ENCODE measurements at regions of chr12 and their contacts with region 1.

Region 1: DNA sequence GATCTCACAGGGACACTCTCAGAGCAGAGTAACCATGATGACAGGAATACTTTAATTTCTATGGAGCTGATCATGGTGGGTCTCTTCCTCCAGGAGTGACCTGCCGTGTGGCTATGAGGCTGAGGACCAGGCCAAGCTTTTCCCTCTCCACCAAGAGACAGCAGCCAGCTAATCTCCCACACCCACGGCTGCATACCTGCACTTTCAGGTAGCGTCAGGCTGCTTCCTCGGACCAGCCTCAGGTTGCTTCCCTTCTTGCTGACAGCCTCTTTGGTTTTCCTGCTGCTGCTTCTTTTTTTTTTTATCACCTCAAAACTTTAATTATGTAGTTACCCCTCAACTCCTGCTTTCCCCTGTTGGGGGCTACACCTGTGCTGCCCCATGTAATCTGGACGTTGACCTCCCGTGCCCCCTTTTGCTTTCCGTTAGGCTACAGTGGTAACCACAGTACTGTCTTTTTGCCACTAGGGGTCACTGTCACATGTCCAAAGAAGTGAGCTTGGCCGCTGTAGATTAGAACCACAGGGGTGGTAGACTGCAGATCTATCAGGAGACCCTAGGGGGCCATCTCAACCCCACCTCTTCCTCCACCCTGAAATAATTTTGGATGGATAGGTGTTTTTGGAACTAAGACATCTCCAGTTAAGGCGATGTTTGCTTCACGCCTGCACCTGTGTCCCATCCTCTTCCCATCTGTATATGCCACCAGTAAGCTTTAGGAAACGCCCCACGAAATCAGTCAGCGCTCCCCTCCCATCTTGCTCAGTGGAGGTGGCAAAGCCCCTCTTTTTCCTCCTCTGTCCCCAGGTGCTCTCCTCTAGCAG is 7.8 kb upstream of the PIP4K2C start:
- DNase-seq: peak; percentile 83
- H3K4me3 Mint-ChIP-seq: no peak overlapping the region
- H3K27ac Mint-ChIP-seq: no peak overlapping the region
- H3K4me1 Mint-ChIP-seq: peaks cover 6% of the 10 kb centered on the region
- H3K27me3 Mint-ChIP-seq: peaks cover 1% of the 10 kb centered on the region

Region 2: DNA sequence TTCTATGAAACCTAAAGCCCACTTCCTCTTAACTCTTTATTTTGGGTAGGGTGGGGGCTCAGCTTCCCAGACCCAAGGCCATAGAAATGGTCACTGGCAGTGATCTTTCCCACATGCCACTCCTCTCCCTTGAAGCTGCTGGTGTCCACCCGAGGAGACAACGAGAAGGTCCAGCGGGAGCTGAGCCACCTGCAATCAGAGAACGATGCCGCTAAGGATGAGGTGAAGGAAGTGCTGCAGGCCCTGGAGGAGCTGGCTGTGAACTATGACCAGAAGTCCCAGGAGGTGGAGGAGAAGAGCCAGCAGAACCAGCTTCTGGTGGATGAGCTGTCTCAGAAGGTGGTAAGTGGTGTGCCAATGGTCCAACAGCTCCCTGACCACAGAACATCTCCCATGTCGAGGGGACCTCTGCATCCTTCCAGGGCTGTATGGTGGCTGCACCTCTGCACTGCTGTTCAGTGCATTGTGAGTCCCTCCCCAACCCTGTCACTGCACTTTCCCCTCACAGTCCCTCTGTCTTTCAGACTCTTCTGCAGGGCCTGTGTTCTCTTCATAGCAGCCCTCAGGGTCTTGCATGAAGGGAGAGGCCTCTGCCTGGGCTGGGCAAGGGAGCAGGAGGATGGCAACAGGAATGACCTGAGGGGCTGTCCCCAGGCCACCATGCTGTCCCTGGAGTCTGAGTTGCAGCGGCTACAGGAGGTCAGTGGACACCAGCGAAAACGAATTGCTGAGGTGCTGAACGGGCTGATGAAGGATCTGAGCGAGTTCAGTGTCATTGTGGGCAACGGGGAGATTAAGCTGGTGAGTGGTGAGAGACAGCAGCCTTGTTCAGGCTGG is 11.1 kb before region 1 on chr12:
- CTCF ChIA-PET with region 1: interaction called, 32 read pairs
- POLR2A ChIA-PET with region 1: no interaction called
- DNase-seq: no peak
- H3K4me3 Mint-ChIP-seq: no peak overlapping the region
- H3K27ac Mint-ChIP-seq: no peak overlapping the region
- H3K4me1 Mint-ChIP-seq: no peaks in the 10 kb centered on the region
- H3K27me3 Mint-ChIP-seq: no peaks in the 10 kb centered on the region

Region 3: DNA sequence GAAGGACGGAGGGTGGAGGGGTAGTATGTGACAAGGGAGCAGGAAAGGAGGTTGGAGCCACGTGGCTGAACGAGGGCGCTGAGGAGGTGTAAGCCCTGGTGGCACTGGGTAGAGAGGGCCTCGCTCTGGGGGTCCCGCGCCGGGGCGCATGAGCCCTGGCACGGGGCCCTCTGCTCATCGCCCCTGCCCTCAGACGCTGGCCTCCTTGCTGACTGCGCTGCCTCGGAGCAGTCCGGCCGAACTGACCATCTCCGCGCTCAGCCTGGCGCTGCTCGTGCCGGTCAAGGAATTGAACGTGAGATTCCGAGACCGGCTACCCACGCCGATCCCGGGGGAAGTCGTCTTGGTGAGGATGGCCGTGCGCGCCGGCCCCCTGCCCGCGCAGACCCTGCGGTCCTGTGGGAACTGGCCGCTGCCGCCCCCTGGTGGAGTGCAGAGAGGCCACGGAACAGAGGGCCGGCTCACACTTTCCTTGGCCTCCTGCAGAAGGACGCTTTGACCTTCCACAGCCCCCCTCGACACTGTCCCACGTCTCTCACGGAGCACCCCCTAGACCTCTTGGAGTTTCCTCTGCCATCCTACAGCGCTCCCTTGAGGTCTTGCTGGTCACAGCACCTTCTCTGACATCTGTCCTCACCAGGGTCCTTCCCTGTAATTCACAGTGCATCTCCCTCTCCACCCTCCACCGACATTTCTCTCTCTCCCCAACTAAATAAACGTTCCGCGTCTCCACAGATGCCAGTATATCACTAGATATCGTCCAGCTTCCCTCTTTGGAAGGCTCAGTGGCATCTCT is 38.5 kb after region 1 on chr12:
- CTCF ChIA-PET with region 1: interaction called, 10 read pairs
- POLR2A ChIA-PET with region 1: no interaction called
- DNase-seq: peak; percentile 58
- H3K4me3 Mint-ChIP-seq: peak overlapping the region; percentile 62
- H3K27ac Mint-ChIP-seq: no peak overlapping the region
- H3K4me1 Mint-ChIP-seq: peaks cover 30% of the 10 kb centered on the region
- H3K27me3 Mint-ChIP-seq: peaks cover 96% of the 10 kb centered on the region

Region 4: DNA sequence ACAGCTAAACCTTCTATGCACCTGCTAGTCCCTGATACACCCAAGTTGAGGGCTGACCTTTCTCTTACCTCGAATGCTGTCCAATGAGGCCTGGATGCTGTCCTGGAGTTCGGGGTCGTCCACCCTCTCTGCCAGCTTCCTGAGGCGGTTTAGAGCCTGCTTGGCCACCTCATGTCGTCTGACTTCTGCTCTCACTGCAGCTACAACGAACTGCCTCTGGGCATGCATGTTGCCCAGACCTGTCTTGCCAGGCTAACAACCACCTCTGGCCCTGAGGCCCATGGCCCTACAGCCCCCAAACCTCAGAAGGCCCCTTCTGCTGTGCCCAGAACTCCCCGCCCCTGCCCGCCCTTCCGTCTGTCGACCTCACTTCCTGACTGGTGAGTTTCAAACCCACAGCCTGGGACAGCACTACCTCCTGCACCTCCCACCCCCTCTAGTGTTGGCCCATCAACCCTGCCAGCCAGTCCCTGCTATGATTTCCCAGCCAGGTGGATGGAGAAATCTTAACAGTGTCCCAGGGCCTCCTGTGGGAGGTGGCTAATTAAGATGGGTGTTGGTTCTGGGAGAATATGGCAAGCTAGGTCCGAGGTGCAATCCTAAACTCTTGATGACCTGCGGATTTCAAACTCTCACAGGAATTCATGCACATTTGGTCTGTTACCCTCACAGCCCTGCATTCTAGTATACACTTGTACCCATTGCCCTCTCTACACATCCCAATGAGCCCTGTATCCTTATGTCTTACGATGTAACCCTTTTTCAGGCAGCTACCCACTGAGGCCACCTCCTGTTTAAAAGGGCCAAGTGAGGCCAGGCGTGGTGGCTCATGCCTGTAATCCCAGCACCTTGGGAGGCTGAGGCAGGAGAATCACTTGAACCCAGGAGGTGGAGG is 158.9 kb after region 1 on chr12:
- CTCF ChIA-PET with region 1: interaction called, 12 read pairs
- POLR2A ChIA-PET with region 1: interaction called, 4 read pairs
- DNase-seq: peak; percentile 90
- H3K4me3 Mint-ChIP-seq: peak overlapping the region; percentile 84
- H3K27ac Mint-ChIP-seq: peak overlapping the region; percentile 85
- H3K4me1 Mint-ChIP-seq: peaks cover 61% of the 10 kb centered on the region
- H3K27me3 Mint-ChIP-seq: no peaks in the 10 kb centered on the region